Spleen (tissue), 13 donors: ENCODE measurements at regions of chr3 and their contacts with region 1.

Region 1: GRCh38 chr3:120177151-120177550 is 82.9 kb upstream of the GSK3B start:
- DNase-seq: no peak
- H3K4me3 ChIP-seq: no peak overlapping the region
- H3K27ac ChIP-seq: peak overlapping the region in 1 of 8 donors; percentile 11
- H3K4me1 ChIP-seq: peaks cover 0 to 12% (median 0%) of the 10 kb centered on the region in 6 donors
- H3K27me3 ChIP-seq: no peaks in the 10 kb centered on the region
- CTCF ChIP-seq: no peak
- POLR2A ChIP-seq: no peak

Region 2: DNA sequence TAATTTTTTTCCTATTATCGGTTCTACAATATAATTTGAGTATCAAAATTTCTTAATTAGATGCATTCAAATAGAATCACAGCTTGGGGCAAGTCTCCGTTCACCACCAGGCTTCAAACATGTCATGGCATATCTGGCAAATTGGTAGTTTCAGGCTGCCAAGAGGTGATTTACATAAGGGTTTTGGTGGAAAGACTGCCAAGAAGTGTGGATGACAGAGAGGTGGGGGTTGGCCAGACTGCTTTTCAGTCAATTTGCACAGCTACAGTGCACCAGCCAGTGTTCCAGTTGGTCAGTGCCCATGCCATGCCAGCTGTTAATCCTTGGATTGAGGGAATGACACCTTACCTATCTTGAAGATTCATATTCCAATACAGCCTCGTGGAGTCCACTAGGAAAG is 74.5 kb before region 1 on chr3:
- intact Hi-C with region 1: loop called (anchors 10 kb)
- DNase-seq: no peak
- H3K4me3 ChIP-seq: no peak overlapping the region
- H3K27ac ChIP-seq: no peak overlapping the region
- H3K4me1 ChIP-seq: peaks cover 0 to 13% (median 1%) of the 10 kb centered on the region in 6 donors
- H3K27me3 ChIP-seq: no peaks in the 10 kb centered on the region
- CTCF ChIP-seq: no peak
- POLR2A ChIP-seq: no peak